ENCODE measurements at regions of chr11 and their contacts with region 1.

Region 1: GRCh38 chr11:118227865-118228785 is 3.3 kb upstream of the JAML start:
- DNase-seq: no peak
- ATAC-seq: no peak
- H3K4me3 Mint-ChIP-seq: peak overlapping the region; percentile 63
- H3K27ac Mint-ChIP-seq: peak overlapping the region; percentile 95
- H3K4me1 Mint-ChIP-seq: peaks cover 43% of the 10 kb centered on the region
- H3K27me3 Mint-ChIP-seq: no peaks in the 10 kb centered on the region

Region 2: GRCh38 chr11:118128721-118129470 is 99.2 kb before region 1 on chr11:
- POLR2A ChIA-PET with region 1: no interaction called
- DNase-seq: no peak
- ATAC-seq: no peak
- H3K4me3 Mint-ChIP-seq: no peak overlapping the region
- H3K27ac Mint-ChIP-seq: no peak overlapping the region
- H3K4me1 Mint-ChIP-seq: peaks cover 11% of the 10 kb centered on the region
- H3K27me3 Mint-ChIP-seq: peaks cover 16% of the 10 kb centered on the region

Region 3: DNA sequence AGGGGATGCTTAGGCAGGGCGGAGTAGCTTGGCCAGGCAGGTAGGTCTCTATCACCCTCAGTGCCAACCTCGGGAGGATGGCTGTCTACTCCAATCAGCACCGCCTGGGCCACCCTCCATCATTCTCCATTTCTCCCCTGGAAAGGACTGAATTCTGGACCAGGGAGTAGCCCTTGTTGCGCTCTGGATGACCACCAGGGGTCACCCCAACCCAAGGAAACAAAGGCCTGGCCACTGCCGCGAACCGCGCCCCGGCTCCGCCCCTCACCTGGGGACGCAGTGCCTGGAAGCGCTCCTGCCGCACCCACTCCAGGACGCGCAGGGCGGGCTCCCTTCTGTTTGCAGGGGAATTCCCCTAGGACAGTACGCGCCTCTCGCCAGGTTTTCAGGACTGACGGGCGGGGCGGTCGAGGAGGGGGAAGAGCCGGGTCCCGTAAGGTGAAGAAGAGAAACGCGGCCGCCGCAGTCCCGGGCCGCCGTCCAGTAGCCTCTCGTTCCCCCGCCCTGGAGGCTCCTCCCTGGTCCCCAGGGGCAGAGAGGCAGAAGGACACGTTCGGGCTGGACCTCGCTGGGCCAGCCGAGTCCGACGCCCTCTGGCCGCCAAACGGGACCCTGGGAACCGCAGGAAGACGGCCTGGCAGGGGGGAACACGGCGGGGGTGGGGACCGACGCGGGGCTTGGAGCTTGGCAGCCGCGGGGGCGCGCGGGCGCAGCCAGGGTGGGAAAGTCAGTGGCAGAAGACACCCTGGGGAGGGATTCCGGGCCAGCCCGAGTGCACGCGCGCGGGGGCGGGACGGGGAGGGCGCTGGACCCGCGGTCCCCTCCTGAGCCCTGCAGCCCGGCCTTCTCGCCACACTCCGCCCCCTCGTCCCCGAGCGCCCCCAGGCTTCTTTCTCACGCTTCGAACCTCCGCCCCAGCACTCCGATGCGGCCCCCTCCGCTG is 82.6 kb before region 1 on chr11:
- POLR2A ChIA-PET with region 1: no interaction called
- DNase-seq: peak; percentile 91
- ATAC-seq: peak; percentile 87
- H3K4me3 Mint-ChIP-seq: peak overlapping the region; percentile 86
- H3K27ac Mint-ChIP-seq: no peak overlapping the region
- H3K4me1 Mint-ChIP-seq: peaks cover 24% of the 10 kb centered on the region
- H3K27me3 Mint-ChIP-seq: peaks cover 66% of the 10 kb centered on the region

Region 4: GRCh38 chr11:118198370-118198769 is 29.8 kb before region 1 on chr11:
- POLR2A ChIA-PET with region 1: interaction called, 50 read pairs
- DNase-seq: peak; percentile 88
- ATAC-seq: peak; percentile 15
- H3K4me3 Mint-ChIP-seq: peak overlapping the region; percentile 39
- H3K27ac Mint-ChIP-seq: peak overlapping the region; percentile 85
- H3K4me1 Mint-ChIP-seq: peaks cover 15% of the 10 kb centered on the region
- H3K27me3 Mint-ChIP-seq: no peaks in the 10 kb centered on the region

Region 5: DNA sequence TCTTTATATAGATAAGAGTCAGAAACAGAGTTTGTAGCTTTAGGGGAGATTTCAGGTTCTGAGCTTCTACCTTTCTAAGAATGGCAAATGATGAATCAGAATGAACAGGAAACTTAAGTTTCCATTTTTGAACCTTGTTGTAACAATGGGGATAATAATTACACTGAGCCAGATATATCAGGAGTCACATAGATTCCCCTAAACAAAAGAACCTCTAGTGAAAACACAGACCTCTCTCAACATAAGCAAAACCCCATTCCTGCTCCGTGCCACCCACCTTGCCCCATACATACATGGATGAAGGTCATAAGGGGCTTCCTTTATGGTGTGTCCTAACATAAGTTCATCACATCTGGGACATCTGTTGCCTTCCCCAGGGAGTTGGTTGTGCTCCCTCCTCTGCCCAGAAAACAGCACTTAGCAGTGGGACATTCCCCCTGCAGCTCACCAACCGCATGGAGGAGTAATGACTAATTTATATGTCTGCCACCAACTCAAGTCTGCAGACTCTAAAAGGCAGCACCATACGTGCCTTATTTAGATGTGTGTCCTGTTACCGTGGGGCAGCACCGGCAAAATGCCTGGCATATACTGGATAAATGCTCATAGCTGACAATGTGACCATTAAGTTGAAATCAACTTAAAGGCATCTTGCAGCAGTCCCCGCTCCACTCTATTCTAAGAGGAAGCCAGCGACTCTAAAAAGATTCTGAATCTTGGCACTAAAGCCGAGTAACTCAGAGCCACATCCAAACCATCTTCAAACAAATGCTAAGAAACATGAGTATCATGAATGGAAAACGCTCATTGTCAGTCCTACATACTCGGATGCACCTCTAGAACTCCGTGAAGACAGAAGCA is 11.3 kb before region 1 on chr11:
- POLR2A ChIA-PET with region 1: interaction called, 73 read pairs
- DNase-seq: no peak
- ATAC-seq: peak; percentile 50
- H3K4me3 Mint-ChIP-seq: peak overlapping the region; percentile 82
- H3K27ac Mint-ChIP-seq: peak overlapping the region; percentile 95
- H3K4me1 Mint-ChIP-seq: peaks cover 91% of the 10 kb centered on the region
- H3K27me3 Mint-ChIP-seq: no peaks in the 10 kb centered on the region

Region 6: DNA sequence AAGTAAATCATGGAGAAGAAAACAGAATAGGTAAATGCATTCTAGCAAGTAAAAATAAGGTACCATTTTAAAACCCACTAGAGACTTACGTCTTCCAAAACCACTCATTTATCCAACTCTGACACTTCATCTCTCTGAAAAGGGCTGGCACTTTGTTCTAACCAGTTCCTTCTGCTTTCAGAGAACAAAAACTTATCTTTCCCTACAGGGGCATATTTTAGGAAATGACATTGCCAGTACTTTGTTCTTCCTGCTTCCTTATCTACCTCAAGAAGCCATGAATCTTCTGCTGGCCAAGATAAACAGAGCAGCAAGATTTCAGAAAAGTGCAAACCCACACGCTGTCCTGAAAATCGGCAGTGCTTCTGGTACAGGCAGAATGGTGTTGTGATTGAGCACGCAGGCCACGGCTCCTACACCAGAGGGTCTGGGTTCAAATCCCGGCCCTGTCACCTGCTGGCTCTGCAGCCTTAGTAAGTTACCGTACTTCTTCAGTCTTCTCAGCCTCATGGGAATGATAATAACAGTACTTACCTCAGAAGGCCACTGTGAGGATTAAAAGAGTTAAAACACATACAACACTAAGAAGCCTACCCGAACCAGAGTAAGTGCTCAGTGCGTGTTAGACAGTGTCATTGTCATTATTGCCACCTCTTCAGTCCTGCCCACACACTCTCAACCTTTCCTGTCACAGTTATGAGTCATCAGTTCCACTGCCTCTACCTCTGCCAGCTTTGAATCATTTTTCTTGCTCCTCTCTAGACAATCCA is 13.1 kb after region 1 on chr11:
- POLR2A ChIA-PET with region 1: interaction called, 49 read pairs
- DNase-seq: no peak
- ATAC-seq: peak; percentile 94
- H3K4me3 Mint-ChIP-seq: peak overlapping the region; percentile 65
- H3K27ac Mint-ChIP-seq: peak overlapping the region; percentile 90
- H3K4me1 Mint-ChIP-seq: peaks cover 64% of the 10 kb centered on the region
- H3K27me3 Mint-ChIP-seq: no peaks in the 10 kb centered on the region

Region 7: GRCh38 chr11:118251858-118252652 is 23.9 kb after region 1 on chr11 and contains the start of gene MPZL3:
- POLR2A ChIA-PET with region 1: interaction called, 39 read pairs
- DNase-seq: peak; percentile 83
- ATAC-seq: peak; percentile 71
- H3K4me3 Mint-ChIP-seq: peak within 1 kb of the TSS; percentile 95
- H3K27ac Mint-ChIP-seq: peak within 1 kb of the TSS; percentile 98
- H3K4me1 Mint-ChIP-seq: peaks cover 30% of the 10 kb centered on the region
- H3K27me3 Mint-ChIP-seq: no peaks in the 10 kb centered on the region
- total RNA-seq, gene MPZL3: 24.5 to 29.8 TPM

Region 8: DNA sequence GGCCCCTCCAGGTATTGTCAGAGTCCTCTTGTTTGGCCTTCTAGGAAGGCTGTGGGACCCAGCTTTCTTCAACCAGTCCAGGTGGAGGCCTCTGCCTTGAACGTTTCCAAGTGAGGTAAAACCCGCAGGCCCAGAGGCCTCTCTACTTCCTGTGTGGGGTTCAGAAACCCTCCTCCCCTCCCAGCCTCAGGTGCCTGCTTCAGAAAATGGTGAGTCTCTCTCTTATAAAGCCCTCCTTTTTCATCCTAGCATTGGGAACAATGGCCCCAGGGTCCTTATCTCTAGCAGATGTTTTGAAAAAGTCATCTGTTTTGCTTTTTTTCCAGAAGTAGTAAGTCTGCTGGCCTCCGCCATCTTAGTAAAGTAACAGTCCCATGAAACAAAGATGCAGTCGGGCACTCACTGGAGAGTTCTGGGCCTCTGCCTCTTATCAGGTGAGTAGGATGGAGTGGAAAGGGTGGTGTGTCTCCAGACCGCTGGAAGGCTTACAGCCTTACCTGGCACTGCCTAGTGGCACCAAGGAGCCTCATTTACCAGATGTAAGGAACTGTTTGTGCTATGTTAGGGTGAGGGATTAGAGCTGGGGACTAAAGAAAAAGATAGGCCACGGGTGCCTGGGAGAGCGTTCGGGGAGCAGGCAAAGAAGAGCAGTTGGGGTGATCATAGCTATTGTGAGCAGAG is 76.6 kb after region 1 on chr11 and contains the start of gene CD3E:
- POLR2A ChIA-PET with region 1: interaction called, 14 read pairs
- DNase-seq: peak; percentile 70
- ATAC-seq: peak; percentile 79
- H3K4me3 Mint-ChIP-seq: peak within 1 kb of the TSS; percentile 96
- H3K27ac Mint-ChIP-seq: peak within 1 kb of the TSS; percentile 99
- H3K4me1 Mint-ChIP-seq: peaks cover 54% of the 10 kb centered on the region
- H3K27me3 Mint-ChIP-seq: no peaks in the 10 kb centered on the region
- total RNA-seq, gene CD3E: 607 to 630 TPM

Region 9: DNA sequence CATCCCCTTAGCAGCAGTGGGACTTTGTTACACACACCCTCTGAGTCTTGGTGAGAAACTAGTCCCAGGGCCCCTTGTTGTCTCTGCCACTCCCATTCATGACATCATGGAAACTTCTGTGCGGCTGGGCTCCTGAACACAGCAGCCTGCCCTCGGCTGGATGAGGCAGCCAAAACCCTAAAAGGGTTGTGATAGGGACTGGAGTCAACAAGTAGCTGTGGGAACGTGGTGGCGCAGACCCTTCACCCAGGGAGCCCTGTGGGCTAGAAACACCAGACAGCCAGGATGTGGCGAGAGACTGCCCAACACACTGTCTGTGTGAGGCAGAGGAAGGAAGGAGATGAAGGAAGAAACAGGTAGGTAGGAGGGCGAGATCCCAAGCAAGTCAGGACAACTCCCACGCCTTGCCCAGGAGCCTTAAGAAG is 110.5 kb after region 1 on chr11:
- POLR2A ChIA-PET with region 1: interaction called, 10 read pairs
- DNase-seq: peak; percentile 85
- ATAC-seq: peak; percentile 65
- H3K4me3 Mint-ChIP-seq: peak overlapping the region; percentile 89
- H3K27ac Mint-ChIP-seq: peak overlapping the region; percentile 97
- H3K4me1 Mint-ChIP-seq: peaks cover 56% of the 10 kb centered on the region
- H3K27me3 Mint-ChIP-seq: no peaks in the 10 kb centered on the region

Region 10: DNA sequence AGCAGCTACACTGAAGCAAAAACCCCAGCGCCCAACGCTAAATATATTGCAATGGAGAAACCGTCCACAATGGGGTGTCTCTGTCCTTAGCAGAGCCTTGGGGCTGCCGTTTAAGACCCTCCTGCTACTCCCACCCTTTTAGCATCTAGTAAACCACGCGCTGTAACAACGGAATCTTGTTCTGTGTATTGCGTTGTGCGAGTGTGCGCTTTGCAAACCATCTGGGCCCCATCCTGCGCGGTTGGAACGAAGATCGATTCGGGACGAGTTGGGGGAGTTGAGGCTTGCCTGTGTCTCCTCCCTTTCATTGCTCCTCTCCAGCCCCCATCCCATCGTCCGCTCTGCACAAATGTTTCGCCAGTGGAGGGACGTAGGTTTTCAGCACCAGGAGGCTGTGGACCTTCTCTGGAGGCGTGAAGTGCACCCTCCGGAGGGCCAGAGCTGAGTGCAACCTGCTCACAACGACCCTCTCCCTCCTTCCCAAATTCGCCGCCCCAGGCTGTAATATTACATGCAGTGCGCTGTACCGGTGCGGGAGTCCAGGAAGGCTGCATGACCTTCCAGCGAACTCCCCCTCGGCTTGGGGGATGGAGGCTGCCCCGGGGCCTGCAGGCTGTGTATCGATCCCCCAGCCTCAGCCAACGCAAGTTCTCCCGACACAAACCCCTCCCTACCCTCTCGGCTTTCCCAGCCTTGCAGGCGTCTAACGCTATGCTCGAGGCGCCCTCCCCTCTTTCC is 206.6 kb after region 1 on chr11:
- POLR2A ChIA-PET with region 1: no interaction called
- DNase-seq: peak; percentile 61
- ATAC-seq: peak; percentile 27
- H3K4me3 Mint-ChIP-seq: peak overlapping the region; percentile 97
- H3K27ac Mint-ChIP-seq: peak overlapping the region; percentile 94
- H3K4me1 Mint-ChIP-seq: peaks cover 17% of the 10 kb centered on the region
- H3K27me3 Mint-ChIP-seq: peaks cover 4% of the 10 kb centered on the region